ENCODE measurements at regions of chrX and their contacts with region 1.

Region 1: GRCh38 chrX:108537005-108537404 is 97.4 kb downstream of the COL4A5 start:
- DNase-seq: peak; percentile 33
- H3K4me3 Mint-ChIP-seq: no peak overlapping the region
- H3K27ac Mint-ChIP-seq: no peak overlapping the region
- H3K4me1 Mint-ChIP-seq: no peaks in the 10 kb centered on the region
- H3K27me3 Mint-ChIP-seq: no peaks in the 10 kb centered on the region
- CTCF ChIP-seq: peak; percentile 52

Region 2: DNA sequence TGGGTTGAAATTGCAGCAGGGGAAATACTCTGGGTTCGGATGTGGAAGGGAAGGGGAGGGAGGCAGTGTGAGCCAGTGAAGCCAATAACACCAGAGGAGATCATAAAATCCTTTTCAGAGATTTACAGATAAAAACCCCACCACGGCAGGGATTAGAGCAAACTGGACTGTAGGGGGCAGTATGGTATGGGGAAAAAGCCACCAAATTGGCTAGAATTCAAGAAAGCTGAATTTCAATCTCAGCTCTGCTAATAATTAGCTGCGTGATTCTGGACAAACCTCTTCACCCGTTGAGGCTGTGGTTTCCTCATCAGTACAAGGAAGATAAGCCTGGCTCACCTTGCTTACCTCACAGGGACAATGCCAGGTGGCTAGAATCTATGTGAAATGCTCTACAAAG is 337.3 kb before region 1 on chrX:
- CTCF ChIA-PET with region 1: no interaction called
- intact Hi-C with region 1: loop called (anchors 1 kb)
- DNase-seq: peak; percentile 63
- H3K4me3 Mint-ChIP-seq: no peak overlapping the region
- H3K27ac Mint-ChIP-seq: no peak overlapping the region
- H3K4me1 Mint-ChIP-seq: no peaks in the 10 kb centered on the region
- H3K27me3 Mint-ChIP-seq: peaks cover 15% of the 10 kb centered on the region
- CTCF ChIP-seq: peak; percentile 29

Region 3: GRCh38 chrX:108304210-108304609 is 232.8 kb before region 1 on chrX:
- CTCF ChIA-PET with region 1: no interaction called
- intact Hi-C with region 1: loop called (anchors 2 kb)
- DNase-seq: peak; percentile 26
- H3K4me3 Mint-ChIP-seq: no peak overlapping the region
- H3K27ac Mint-ChIP-seq: no peak overlapping the region
- H3K4me1 Mint-ChIP-seq: peaks cover 24% of the 10 kb centered on the region
- H3K27me3 Mint-ChIP-seq: no peaks in the 10 kb centered on the region
- CTCF ChIP-seq: peak; percentile 21

Region 4: GRCh38 chrX:108494406-108495090 is 42.5 kb before region 1 on chrX:
- CTCF ChIA-PET with region 1: no interaction called
- intact Hi-C with region 1: no loop called
- DNase-seq: no peak
- H3K4me3 Mint-ChIP-seq: no peak overlapping the region
- H3K27ac Mint-ChIP-seq: no peak overlapping the region
- H3K4me1 Mint-ChIP-seq: no peaks in the 10 kb centered on the region
- H3K27me3 Mint-ChIP-seq: no peaks in the 10 kb centered on the region
- CTCF ChIP-seq: no peak

Region 5: GRCh38 chrX:109077788-109078187 is 540.8 kb after region 1 on chrX:
- CTCF ChIA-PET with region 1: no interaction called
- intact Hi-C with region 1: no loop called
- DNase-seq: no peak
- H3K4me3 Mint-ChIP-seq: no peak overlapping the region
- H3K27ac Mint-ChIP-seq: no peak overlapping the region
- H3K4me1 Mint-ChIP-seq: no peaks in the 10 kb centered on the region
- H3K27me3 Mint-ChIP-seq: no peaks in the 10 kb centered on the region
- CTCF ChIP-seq: no peak